HCT116 (cell line): ENCODE measurements at regions of chr1 and their contacts with region 1.

Region 1: GRCh38 chr1:150995896-150996295 is 10.8 kb downstream of the MINDY1 start:
- DNase-seq: no peak
- ATAC-seq: peak; percentile 73
- H3K4me3 ChIP-seq: no peak overlapping the region
- H3K27ac ChIP-seq: no peak overlapping the region
- H3K4me1 ChIP-seq: peaks cover 6 to 37% of the 10 kb centered on the region in 2 experiments; a peak in 3 of 4 replicates
- H3K27me3 ChIP-seq: no peaks in the 10 kb centered on the region
- CTCF ChIP-seq: peak; percentile 61 to 85 (median 76); a peak in 5 of 6 replicates
- POLR2A ChIP-seq: no peak
- RAD21 ChIP-seq: peak; percentile 87

Region 2: DNA sequence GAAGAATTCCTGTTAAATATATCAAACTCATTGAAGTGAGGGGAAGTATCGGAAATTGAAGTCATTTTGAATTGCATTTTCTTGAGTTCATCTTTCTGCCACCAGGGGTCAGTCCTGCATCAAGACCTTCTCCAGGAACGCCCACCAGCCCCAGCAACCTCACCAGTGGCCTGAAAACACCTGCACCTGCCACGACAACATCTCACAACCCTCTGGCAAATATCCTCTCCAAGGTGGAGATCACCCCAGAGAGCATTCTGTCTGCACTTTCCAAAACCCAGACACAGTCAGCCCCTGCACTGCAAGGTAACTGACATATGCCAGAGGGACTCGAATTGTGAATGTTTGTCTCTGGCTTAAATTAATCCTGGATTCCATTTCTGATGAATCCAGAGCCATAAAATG is 531.5 kb before region 1 on chr1:
- CTCF ChIA-PET with region 1: interaction called, 3 read pairs
- POLR2A ChIA-PET with region 1: no interaction called
- RAD21 ChIA-PET with region 1: no interaction called
- intact Hi-C with region 1: loop called (anchors 5 kb)
- DNase-seq: peak; percentile 41
- ATAC-seq: peak; percentile 81
- H3K4me3 ChIP-seq: no peak overlapping the region
- H3K27ac ChIP-seq: no peak overlapping the region
- H3K4me1 ChIP-seq: no peaks in the 10 kb centered on the region
- H3K27me3 ChIP-seq: no peaks in the 10 kb centered on the region
- CTCF ChIP-seq: peak; percentile 64 to 79 (median 67)
- POLR2A ChIP-seq: no peak
- RAD21 ChIP-seq: peak; percentile 83

Region 3: GRCh38 chr1:150979092-150980056 is 16.5 kb before region 1 on chr1:
- CTCF ChIA-PET with region 1: interaction called, 17 read pairs
- POLR2A ChIA-PET with region 1: interaction called, 3 read pairs
- RAD21 ChIA-PET with region 1: interaction called in 1 of 2 experiments, 6 read pairs
- intact Hi-C with region 1: no loop called
- DNase-seq: peak; percentile 78
- ATAC-seq: peak; percentile 42
- H3K4me3 ChIP-seq: no peak overlapping the region
- H3K27ac ChIP-seq: peak overlapping the region; percentile 92
- H3K4me1 ChIP-seq: peaks cover 71 to 83% of the 10 kb centered on the region in 2 experiments
- H3K27me3 ChIP-seq: no peaks in the 10 kb centered on the region
- CTCF ChIP-seq: peak in 2 of 3 experiments; percentile 100; a peak in 4 of 6 replicates
- POLR2A ChIP-seq: no peak
- RAD21 ChIP-seq: no peak

Region 4: GRCh38 chr1:151008190-151008860 is 12.4 kb after region 1 on chr1 and contains the start of gene PRUNE1:
- CTCF ChIA-PET with region 1: interaction called, 24 read pairs
- POLR2A ChIA-PET with region 1: interaction called, 4 read pairs
- RAD21 ChIA-PET with region 1: no interaction called
- intact Hi-C with region 1: no loop called
- DNase-seq: peak; percentile 94
- ATAC-seq: peak; percentile 92
- H3K4me3 ChIP-seq: peak within 1 kb of the TSS; percentile 60 to 94
- H3K27ac ChIP-seq: peak within 1 kb of the TSS; percentile 75
- H3K4me1 ChIP-seq: peaks cover 13 to 40% of the 10 kb centered on the region in 2 experiments; a peak in 3 of 4 replicates
- H3K27me3 ChIP-seq: no peaks in the 10 kb centered on the region
- CTCF ChIP-seq: no peak
- POLR2A ChIP-seq: peak; percentile 58
- RAD21 ChIP-seq: no peak
- total RNA-seq, gene PRUNE1: 20.2 TPM

Region 5: DNA sequence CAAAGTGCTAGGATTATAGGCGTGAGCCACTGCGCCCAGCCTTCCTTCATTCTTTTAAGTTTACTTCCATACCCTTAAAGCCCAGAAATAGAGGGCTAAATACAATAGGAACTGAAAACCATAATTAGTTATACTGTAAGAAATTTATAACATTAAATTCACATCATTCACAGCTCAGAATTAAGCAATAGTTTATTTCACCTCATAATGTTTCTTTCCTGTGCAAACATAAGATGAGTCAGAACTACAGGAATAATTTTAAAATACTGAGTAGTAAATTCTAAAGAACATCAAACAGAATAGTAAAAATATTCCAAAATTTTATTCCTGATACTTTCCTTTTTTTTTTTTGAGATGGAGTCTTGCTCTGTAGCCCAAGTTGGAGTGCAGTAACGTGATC is 439.3 kb after region 1 on chr1:
- CTCF ChIA-PET with region 1: no interaction called
- POLR2A ChIA-PET with region 1: no interaction called
- RAD21 ChIA-PET with region 1: no interaction called
- intact Hi-C with region 1: no loop called
- DNase-seq: no peak
- ATAC-seq: no peak
- H3K4me3 ChIP-seq: no peak overlapping the region
- H3K27ac ChIP-seq: no peak overlapping the region
- H3K4me1 ChIP-seq: peaks cover 0 to 3% of the 10 kb centered on the region in 2 experiments; a peak in 1 of 4 replicates
- H3K27me3 ChIP-seq: no peaks in the 10 kb centered on the region
- CTCF ChIP-seq: no peak
- POLR2A ChIP-seq: no peak
- RAD21 ChIP-seq: no peak